ENCODE measurements at regions of chrX and their contacts with region 1.

Region 1: DNA sequence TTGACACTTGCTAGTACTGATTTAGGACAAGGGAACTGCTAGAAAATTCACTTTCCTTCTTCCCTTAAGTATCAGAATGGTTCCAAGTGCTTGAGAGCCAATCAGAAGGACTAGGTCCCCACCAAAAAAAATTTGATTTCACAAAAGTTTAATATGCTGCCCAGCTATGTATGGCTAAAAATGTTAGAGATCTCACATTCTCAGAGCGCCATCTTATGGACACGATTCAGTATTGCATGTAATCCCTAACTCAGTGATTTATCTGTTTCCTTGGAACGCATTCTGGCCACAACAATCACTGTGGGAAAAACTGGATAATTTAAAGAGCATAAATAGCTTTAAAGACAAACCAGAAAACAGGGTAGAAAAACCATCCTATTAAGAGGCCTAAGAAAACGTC is 255.1 kb upstream of the GPC4 start:
- DNase-seq: no peak
- ATAC-seq: peak; percentile 30 to 50

Region 2: GRCh38 chrX:133333154-133333750 is 337.1 kb before region 1 on chrX:
- intact Hi-C with region 1: loop called in 1 of 2 experiments (anchors 5 kb)
- DNase-seq: no peak
- ATAC-seq: no peak

Region 3: DNA sequence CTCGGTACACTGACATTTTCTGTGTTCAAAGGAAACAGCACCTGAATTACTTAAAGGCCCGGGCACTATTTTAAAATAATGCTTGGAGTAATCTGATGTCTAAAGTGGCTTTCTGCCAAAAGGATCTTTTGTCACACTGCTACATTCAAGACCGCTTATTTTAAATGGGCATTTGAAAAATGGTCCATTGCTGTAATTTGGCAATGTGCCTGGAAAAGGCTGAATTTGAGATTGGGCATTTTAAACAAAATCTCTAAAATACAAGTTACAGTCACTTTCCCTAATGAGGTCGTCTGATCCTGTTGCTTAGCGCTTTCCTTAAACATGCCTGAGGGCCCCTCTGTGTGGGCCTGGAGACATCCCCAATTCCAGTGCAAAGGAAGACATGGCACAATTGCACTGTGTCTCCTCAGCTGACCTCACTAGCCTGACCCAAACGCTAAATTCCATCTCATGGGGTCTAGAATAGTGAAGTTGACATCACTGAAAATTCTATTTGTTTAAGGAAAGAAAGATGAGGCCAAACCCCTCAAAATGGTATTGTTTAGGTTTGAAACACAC is 100.8 kb after region 1 on chrX:
- intact Hi-C with region 1: no loop called
- DNase-seq: no peak
- ATAC-seq: no peak